ENCODE measurements at regions of chr12 and their contacts with region 1.

Region 1: DNA sequence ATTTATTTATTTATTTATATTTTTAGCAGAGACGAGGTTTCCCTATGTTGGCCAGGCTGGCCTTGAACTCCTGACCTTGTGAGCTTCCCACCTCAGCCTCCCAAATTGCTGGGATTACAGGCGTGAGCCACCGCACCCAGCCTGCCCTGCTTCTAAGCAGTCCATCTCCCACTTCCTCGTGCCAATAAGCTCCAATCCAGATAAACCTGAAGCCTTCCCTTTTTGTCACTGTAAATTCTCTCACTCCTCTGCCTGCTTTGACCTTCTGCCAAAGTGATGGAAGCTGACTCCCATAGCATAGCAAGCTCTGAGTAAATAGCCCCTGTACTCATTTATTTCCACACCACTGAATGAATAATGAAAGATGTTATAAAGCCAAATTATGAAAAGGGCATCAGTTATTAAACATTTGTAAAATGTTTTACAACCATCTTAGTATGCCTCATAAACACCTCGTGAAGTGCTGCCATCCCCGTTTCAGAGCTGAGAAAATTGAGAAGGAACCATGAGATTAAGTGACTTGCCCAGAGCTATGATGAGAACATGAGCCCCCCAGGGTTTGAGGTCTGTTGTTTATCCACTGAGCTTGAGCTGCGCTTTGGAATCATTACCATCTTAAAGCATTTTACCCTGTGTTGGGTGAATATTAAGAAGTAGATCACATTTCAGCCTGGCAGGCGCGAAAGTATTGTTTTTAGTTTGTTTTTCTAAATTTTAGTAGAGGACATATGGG is 30.4 kb downstream of the MANSC1 start:
- DNase-seq: no peak
- H3K4me3 ChIP-seq: no peak overlapping the region
- H3K4me3 Mint-ChIP-seq: peak overlapping the region; percentile 69
- H3K27ac Mint-ChIP-seq: peak overlapping the region; percentile 88
- H3K4me1 ChIP-seq: peaks cover 26% of the 10 kb centered on the region
- H3K4me1 Mint-ChIP-seq: peaks cover 39% of the 10 kb centered on the region
- H3K27me3 ChIP-seq: no peaks in the 10 kb centered on the region
- H3K27me3 Mint-ChIP-seq: no peaks in the 10 kb centered on the region
- CTCF ChIP-seq: no peak

Region 2: GRCh38 chr12:12290206-12290605 is 29.4 kb before region 1 on chr12:
- CTCF ChIA-PET with region 1: no interaction called
- POLR2A ChIA-PET with region 1: no interaction called
- intact Hi-C with region 1: no loop called
- DNase-seq: peak in 1 of 2 experiments; percentile 3
- H3K4me3 ChIP-seq: no peak overlapping the region
- H3K4me3 Mint-ChIP-seq: no peak overlapping the region
- H3K27ac Mint-ChIP-seq: no peak overlapping the region
- H3K4me1 ChIP-seq: peaks cover 2% of the 10 kb centered on the region
- H3K4me1 Mint-ChIP-seq: peaks cover 6% of the 10 kb centered on the region
- H3K27me3 ChIP-seq: no peaks in the 10 kb centered on the region
- H3K27me3 Mint-ChIP-seq: no peaks in the 10 kb centered on the region
- CTCF ChIP-seq: no peak

Region 3: DNA sequence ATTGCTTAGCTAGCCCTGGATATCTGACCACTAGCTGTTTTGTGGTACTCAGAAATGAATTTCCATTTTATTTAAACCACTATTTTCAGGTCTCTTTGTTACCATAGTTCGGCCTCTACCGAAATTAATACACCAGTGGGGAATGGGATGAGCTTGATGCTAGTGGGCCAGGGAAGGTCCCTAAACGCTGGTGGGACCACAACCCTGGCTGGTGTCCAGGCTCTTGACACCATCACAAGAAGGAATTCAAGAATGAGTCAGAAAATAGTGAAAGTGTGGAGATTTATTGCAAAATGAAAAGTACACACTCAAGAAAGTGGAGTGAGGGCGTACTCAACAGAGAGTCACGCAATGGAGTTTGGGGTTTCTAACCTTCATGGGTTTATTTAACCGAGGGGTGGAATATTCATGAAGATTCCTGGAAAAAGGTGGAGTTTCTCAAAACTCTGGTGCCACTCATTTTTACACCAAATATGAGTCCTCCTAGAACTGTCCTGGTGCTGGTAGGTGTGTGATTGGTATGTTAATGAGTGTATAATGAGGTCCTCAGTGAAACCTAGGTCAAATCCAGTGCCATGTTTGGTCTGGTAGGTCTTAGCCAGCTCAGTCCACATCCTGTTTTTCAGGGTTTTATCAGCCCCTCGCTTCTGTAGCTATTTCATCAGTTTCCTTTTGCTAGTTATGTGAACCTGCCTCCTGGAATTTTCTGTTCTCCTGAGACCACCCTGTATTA is 13.9 kb before region 1 on chr12:
- CTCF ChIA-PET with region 1: interaction called, 7 read pairs
- POLR2A ChIA-PET with region 1: no interaction called
- intact Hi-C with region 1: loop called (anchors 1 kb)
- DNase-seq: no peak
- H3K4me3 ChIP-seq: no peak overlapping the region
- H3K4me3 Mint-ChIP-seq: no peak overlapping the region
- H3K27ac Mint-ChIP-seq: no peak overlapping the region
- H3K4me1 ChIP-seq: peaks cover 25% of the 10 kb centered on the region
- H3K4me1 Mint-ChIP-seq: peaks cover 32% of the 10 kb centered on the region
- H3K27me3 ChIP-seq: no peaks in the 10 kb centered on the region
- H3K27me3 Mint-ChIP-seq: no peaks in the 10 kb centered on the region
- CTCF ChIP-seq: no peak

Region 4: GRCh38 chr12:12533238-12533829 is 213.7 kb after region 1 on chr12:
- CTCF ChIA-PET with region 1: no interaction called
- POLR2A ChIA-PET with region 1: no interaction called
- intact Hi-C with region 1: no loop called
- DNase-seq: peak; percentile 79 to 91
- H3K4me3 ChIP-seq: no peak overlapping the region
- H3K4me3 Mint-ChIP-seq: peak overlapping the region; percentile 25
- H3K27ac Mint-ChIP-seq: peak overlapping the region; percentile 90
- H3K4me1 ChIP-seq: peaks cover 75% of the 10 kb centered on the region
- H3K4me1 Mint-ChIP-seq: peaks cover 46% of the 10 kb centered on the region
- H3K27me3 ChIP-seq: no peaks in the 10 kb centered on the region
- H3K27me3 Mint-ChIP-seq: no peaks in the 10 kb centered on the region
- CTCF ChIP-seq: no peak